A673 (cell line): ENCODE measurements at regions of chr16 and their contacts with region 1.

Region 1: DNA sequence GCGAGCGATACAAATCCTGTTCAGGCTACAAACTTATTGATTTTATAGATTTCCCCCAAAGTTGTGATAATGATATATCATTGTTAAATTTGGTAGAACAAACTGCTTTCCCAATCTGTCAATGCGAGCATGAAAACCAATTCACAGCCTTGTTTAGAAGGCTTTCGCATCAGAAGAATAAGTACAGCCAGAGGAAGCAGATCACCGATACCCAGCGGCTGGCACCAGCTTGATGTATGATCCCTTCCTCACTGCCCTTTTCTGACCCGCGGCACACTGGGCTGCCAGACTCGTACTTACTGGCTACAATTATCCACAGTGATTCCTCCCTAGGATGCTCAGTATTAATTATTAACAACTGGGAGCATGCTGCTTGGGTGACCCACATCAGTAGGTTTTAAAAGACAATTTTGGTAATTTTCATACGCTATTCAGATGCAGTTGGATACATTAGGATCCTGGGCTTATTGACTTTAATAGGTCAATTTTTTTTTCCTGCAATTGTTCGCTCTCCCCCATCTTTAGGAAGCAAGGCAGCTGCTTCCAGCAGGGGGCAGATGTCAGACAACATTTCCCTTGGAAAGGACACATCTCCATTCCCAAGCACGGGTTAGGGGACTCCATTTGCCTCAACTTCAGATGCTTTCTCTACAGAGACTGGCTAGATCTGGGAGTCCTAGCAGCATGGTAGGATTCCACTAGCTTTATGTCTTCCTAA is 582.7 kb upstream of the PSMD7 start:
- DNase-seq: peak; percentile 60
- H3K4me3 ChIP-seq: no peak overlapping the region
- H3K27ac ChIP-seq: no peak overlapping the region
- H3K4me1 ChIP-seq: no peaks in the 10 kb centered on the region
- H3K27me3 ChIP-seq: peaks cover 6% of the 10 kb centered on the region
- CTCF ChIP-seq: peak; percentile 69

Region 2: DNA sequence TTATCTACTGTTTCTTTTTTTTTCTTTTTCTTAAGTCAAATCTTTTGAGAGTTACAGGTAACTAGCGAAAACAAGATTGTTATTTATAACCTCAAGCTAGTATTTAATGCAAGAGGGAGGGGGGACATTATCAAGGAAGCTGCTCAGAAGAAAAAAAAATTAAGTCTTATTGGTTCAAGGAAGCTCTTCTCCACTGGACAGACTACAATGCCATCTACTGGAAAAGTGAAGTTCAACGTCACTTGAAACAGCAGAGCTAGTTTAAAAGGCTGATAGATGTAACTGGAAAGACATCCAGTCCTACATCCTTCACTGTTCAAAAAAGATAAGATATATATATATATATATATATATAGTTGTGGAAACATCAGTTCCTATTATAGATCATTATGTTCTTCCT is 164.7 kb after region 1 on chr16:
- CTCF ChIA-PET with region 1: no interaction called
- POLR2A ChIA-PET with region 1: no interaction called
- intact Hi-C with region 1: loop called (anchors 10 kb)
- DNase-seq: peak; percentile 65
- H3K4me3 ChIP-seq: no peak overlapping the region
- H3K27ac ChIP-seq: no peak overlapping the region
- H3K4me1 ChIP-seq: no peaks in the 10 kb centered on the region
- H3K27me3 ChIP-seq: peaks cover 91% of the 10 kb centered on the region
- CTCF ChIP-seq: peak; percentile 59

Region 3: DNA sequence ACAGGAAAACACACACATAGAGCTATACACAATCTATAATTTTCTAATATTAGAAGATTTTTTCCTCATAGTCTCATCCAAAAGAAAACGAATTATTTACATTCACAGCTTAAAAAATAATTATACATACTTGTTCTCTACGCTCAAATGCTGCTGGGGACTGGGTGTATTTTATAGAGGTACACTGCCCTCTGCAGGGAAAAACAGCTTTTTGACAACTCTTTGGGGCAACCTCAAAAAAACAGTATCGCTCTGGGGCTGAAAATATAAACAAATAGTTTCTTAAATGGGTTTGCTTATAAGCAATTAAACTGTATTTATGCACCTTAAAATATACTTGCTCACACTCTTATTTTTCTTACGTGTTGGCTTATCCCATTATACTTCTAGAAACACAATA is 320.9 kb after region 1 on chr16:
- CTCF ChIA-PET with region 1: no interaction called
- POLR2A ChIA-PET with region 1: no interaction called
- intact Hi-C with region 1: loop called (anchors 10 kb)
- DNase-seq: peak; percentile 49
- H3K4me3 ChIP-seq: no peak overlapping the region
- H3K27ac ChIP-seq: no peak overlapping the region
- H3K4me1 ChIP-seq: no peaks in the 10 kb centered on the region
- H3K27me3 ChIP-seq: no peaks in the 10 kb centered on the region
- CTCF ChIP-seq: peak; percentile 58

Region 4: GRCh38 chr16:74226338-74226954 is 512.5 kb after region 1 on chr16:
- CTCF ChIA-PET with region 1: interaction called, 3 read pairs
- POLR2A ChIA-PET with region 1: no interaction called
- intact Hi-C with region 1: loop called (anchors 5 kb)
- DNase-seq: peak; percentile 62
- H3K4me3 ChIP-seq: no peak overlapping the region
- H3K27ac ChIP-seq: no peak overlapping the region
- H3K4me1 ChIP-seq: peaks cover 9% of the 10 kb centered on the region
- H3K27me3 ChIP-seq: no peaks in the 10 kb centered on the region
- CTCF ChIP-seq: peak; percentile 79

Region 5: DNA sequence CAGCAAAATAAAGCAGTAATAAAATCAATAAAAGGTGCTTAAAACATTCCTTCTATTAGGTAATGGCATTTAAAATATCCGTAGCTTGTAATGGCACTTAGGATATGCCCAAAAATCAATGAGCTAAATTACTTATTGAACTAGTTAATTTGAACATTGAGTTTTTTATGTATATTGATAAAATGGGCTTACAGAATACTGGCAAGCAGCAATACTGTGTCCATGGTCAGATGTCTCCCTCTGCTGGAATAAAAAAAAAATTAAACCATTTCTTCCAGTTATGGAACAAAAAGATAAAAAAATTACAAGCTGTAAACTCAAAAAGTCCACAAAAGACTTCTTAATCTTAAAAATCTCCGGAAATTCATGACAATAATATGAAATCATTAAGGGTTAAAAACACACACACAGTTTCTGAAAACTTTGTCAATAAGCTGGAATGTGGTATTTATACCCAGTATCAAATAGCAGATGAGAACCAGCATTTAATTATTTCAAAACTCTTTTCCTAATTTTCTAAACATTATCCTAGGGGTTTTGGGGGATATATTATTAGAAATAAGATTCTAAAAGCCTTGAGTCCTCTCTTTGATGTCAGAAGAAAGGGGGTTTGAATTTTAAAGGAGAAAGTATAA is 561.2 kb after region 1 on chr16:
- CTCF ChIA-PET with region 1: no interaction called
- POLR2A ChIA-PET with region 1: no interaction called
- intact Hi-C with region 1: loop called (anchors 10 kb)
- DNase-seq: peak; percentile 62
- H3K4me3 ChIP-seq: no peak overlapping the region
- H3K27ac ChIP-seq: no peak overlapping the region
- H3K4me1 ChIP-seq: no peaks in the 10 kb centered on the region
- H3K27me3 ChIP-seq: no peaks in the 10 kb centered on the region
- CTCF ChIP-seq: peak; percentile 73